ENCODE measurements at regions of chr14 and their contacts with region 1.

Region 1: DNA sequence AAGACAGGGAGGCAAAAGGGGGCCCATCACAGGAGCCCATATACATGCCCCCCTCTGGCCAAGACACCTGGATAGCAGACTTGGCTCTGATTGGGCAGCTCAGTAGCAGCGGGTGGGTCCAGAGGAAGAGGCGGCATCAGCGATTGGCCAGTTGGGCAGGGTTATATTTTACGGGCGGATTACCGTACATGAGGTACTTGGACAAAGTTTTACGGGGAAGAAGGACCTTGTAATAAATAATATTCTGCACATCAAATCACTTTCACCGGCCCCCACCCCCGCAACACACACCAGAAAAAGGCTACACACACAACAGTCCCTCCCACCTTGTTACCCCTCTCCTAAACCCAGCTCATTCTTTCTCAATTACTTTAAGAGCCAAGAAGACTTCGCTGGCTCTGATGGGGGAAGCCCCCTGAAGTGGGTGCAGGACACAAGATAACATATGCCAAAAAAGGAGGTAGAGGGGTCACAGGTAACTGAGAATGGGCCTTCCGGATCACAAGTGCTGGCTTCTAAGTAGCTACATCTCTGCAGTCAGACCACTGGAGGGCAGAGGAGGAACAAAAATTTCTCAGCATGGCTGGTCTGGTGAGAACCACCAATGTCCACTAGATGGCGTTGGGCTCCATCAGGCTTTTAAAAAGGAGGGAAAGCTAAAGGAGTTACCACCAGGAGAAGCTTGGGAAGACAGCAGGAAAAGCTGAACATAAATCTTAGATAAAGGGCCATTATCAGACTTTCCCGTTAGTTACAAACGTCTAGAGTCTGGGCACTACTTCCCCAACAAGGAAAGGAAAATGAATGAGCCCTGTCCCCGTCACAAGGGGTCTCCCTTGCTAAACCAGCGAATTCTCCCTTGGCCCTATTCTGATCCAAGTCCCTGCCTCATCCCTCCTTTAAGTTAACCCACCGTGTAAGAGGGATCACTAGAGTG is 11.4 kb upstream of the CDH24 start:
- DNase-seq: peak; percentile 86
- ATAC-seq: peak; percentile 70
- H3K4me3 Mint-ChIP-seq: peak overlapping the region; percentile 48
- H3K27ac Mint-ChIP-seq: peak overlapping the region; percentile 71; the same call in 1 of the 2 replicates
- H3K4me1 Mint-ChIP-seq: peaks cover 38% of the 10 kb centered on the region
- H3K27me3 Mint-ChIP-seq: no peaks in the 10 kb centered on the region
- CTCF ChIP-seq: peak; percentile 74

Region 2: GRCh38 chr14:22955702-22956569 is 112.8 kb before region 1 on chr14:
- CTCF ChIA-PET with region 1: interaction called, 16 read pairs
- POLR2A ChIA-PET with region 1: interaction called, 4 read pairs
- DNase-seq: no peak
- ATAC-seq: no peak
- H3K4me3 Mint-ChIP-seq: peak overlapping the region; percentile 91
- H3K27ac Mint-ChIP-seq: peak overlapping the region; percentile 94
- H3K4me1 Mint-ChIP-seq: peaks cover 20% of the 10 kb centered on the region
- H3K27me3 Mint-ChIP-seq: no peaks in the 10 kb centered on the region
- CTCF ChIP-seq: no peak

Region 3: DNA sequence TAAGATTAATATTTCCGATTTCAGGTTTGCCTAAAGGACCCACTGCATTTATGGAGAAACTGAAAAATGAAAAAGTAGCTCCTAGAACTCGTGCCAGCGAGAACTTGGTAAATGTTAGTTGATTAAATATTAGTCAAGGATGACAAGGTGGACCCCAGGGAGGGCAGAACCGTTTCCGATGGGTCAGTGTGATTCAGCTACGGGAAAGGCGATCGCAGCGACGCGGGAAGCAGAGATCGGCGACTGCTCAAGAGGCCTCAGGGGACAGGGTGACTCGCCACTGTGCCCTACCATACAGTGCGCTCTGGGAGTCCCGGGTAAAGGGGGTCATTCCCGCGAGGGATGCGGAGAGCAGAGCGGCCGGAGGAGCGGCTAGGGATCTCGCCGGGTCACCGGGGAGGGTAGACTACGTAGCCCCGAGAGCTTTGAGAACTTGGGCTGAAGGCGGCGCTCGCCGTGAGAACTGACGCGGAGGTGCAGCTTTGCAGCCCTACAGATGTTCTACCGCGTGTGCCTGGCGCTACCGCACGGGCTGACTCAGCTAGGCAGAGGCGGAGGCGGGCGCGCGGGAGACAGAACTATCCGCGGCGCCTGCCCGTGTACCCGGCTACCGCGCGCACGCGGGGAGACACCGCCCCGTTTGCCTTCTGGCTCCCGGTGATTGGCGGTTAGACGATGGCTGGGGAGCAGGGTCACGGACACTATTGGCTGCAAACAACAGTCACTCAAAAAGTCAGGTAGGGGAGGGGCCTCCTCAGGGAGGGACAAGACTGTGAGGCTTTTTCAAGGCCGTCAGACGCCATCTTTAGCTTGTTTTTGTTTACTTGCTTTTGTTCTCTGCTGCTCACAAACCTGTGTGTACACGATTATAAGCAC is 62.0 kb before region 1 on chr14:
- CTCF ChIA-PET with region 1: interaction called, 26 read pairs
- POLR2A ChIA-PET with region 1: interaction called, 3 read pairs
- DNase-seq: peak; percentile 96
- ATAC-seq: peak; percentile 97
- H3K4me3 Mint-ChIP-seq: peak overlapping the region; percentile 91
- H3K27ac Mint-ChIP-seq: peak overlapping the region; percentile 100
- H3K4me1 Mint-ChIP-seq: peaks cover 31% of the 10 kb centered on the region
- H3K27me3 Mint-ChIP-seq: no peaks in the 10 kb centered on the region
- CTCF ChIP-seq: no peak

Region 4: DNA sequence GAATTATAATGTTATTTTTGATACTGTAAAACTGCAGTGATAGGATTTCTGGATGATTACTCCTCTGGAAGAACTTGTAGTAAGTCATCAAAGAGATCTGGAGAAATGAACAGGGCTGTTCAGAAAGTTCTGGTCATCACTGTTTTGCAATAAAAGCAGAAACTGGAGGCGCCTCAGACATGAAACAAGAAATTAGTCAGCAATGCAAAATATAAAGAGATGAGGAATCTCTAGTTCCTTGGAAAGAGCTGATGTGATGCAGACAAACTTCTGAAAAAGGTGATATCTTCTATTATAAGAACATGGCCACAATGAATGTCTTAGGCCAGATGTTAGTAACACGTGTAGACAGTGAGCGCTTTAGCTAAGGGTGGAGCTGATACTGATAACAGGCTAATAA is 16.7 kb after region 1 on chr14:
- CTCF ChIA-PET with region 1: interaction called, 20 read pairs
- POLR2A ChIA-PET with region 1: no interaction called
- DNase-seq: no peak
- ATAC-seq: no peak
- H3K4me3 Mint-ChIP-seq: no peak overlapping the region
- H3K27ac Mint-ChIP-seq: no peak overlapping the region
- H3K4me1 Mint-ChIP-seq: no peaks in the 10 kb centered on the region
- H3K27me3 Mint-ChIP-seq: no peaks in the 10 kb centered on the region
- CTCF ChIP-seq: no peak

Region 5: GRCh38 chr14:23125933-23126524 is 57.3 kb after region 1 on chr14:
- CTCF ChIA-PET with region 1: interaction called, 37 read pairs
- POLR2A ChIA-PET with region 1: no interaction called
- DNase-seq: peak; percentile 38
- ATAC-seq: peak; percentile 63
- H3K4me3 Mint-ChIP-seq: no peak overlapping the region
- H3K27ac Mint-ChIP-seq: peak overlapping the region; percentile 43
- H3K4me1 Mint-ChIP-seq: peaks cover 47% of the 10 kb centered on the region
- H3K27me3 Mint-ChIP-seq: no peaks in the 10 kb centered on the region
- CTCF ChIP-seq: no peak

Region 6: DNA sequence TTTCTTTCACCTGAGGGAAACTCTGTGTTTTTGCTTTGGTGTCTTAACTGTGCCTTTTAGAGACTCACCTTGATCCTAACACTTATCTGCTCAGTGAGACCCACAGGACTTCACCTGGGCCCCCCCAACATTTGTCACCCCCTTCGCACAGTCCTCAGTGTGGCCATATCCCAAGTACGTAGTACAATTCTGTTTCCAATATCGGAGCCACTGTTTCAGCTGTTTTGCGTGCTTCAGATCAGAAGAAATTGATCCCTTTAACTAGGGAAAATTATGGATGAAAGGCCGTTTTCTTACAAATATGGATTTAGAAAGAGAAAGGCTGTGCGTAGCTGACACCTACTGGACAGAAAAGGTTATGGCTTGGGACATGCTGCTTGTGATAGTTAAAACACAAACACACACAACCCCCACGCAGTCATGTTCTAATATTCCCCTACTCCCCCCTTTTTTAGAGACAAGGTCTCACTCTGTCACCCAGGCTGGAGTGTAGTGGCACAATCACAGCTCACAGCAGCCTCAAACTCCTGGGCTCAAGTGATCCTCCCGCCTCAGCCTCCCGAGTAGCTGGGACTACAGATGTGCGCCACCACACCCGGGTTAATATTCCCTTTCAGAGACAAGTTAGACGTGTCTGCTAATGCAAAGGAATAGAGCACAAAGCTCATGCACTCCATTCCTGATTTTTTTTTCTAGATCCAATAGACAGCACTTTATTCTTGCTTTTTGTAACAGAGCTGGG is 118.3 kb after region 1 on chr14:
- CTCF ChIA-PET with region 1: interaction called, 20 read pairs
- POLR2A ChIA-PET with region 1: no interaction called
- DNase-seq: no peak
- ATAC-seq: peak; percentile 12; the same call in 1 of the 2 replicates
- H3K4me3 Mint-ChIP-seq: no peak overlapping the region
- H3K27ac Mint-ChIP-seq: peak overlapping the region; percentile 64; the same call in 1 of the 2 replicates
- H3K4me1 Mint-ChIP-seq: peaks cover 27% of the 10 kb centered on the region
- H3K27me3 Mint-ChIP-seq: no peaks in the 10 kb centered on the region
- CTCF ChIP-seq: peak; percentile 53; the same call in 1 of the 2 replicates

Measured in WTC11 (cell line).